Psoas muscle (tissue), 8 donors: ENCODE measurements at regions of chr9 and their contacts with region 1.

Region 1: DNA sequence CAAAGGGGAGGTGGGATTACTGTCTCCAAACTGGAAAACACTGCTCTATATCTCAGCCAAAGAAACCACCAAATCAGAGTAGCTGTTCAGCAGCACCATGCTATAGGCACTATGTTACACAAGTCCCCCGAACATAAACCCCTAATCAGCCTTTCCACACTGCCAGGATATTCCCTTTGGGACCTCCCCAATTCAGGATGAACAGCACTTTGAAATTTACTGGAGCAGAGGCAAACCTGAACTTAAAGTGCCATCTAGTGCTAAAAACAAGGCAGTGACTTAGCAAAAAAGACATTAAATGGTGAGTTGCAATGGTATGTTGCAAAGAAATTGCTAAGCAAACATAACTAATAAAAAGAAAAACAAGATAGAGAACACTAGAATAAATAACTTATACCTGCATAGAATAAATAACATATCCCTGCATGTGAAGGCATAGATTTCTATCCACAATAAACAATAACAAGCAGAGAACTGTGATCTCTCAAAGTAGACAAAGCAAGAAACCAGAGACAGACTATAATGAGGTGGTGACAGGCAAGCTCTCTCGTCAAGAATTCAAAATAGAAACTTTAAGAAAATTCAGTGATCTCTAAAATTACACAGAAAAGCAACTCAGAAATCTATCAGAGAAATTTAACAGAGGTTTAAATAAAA is 584.4 kb upstream of the ACO1 start:
- DNase-seq: no peak
- ATAC-seq: no peak
- H3K4me3 ChIP-seq: no peak overlapping the region
- H3K27ac ChIP-seq: no peak overlapping the region
- H3K4me1 ChIP-seq: no peaks in the 10 kb centered on the region
- H3K27me3 ChIP-seq: no peaks in the 10 kb centered on the region
- CTCF ChIP-seq: peak; percentile 41

Region 2: GRCh38 chr9:31119882-31120454 is 680.1 kb before region 1 on chr9:
- intact Hi-C with region 1: loop called in 1 of 2 experiments (anchors 10 kb)
- DNase-seq: no peak
- ATAC-seq: no peak
- H3K4me3 ChIP-seq: no peak overlapping the region
- H3K27ac ChIP-seq: no peak overlapping the region
- H3K4me1 ChIP-seq: no peaks in the 10 kb centered on the region
- H3K27me3 ChIP-seq: no peaks in the 10 kb centered on the region
- CTCF ChIP-seq: peak; percentile 31

Region 3: DNA sequence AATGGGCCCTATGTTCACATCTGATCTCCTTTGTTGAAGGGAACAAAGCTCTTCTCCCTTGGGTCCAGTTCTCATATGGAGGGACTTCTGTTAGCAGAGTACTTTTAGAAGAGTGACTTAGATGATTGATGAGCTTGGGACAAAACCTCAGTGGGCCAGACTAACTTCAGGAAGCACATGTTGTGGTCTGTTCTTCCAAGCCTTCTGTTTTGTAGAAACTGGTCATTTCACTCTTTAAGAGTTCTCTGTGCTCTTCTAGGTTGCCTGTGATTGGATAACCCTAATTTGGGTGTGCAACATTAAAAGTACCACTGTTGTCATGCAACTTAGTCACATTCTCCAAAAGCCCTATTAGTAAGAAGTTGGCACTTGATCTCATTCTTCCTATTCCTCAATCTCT is 400.8 kb after region 1 on chr9:
- intact Hi-C with region 1: no loop called
- DNase-seq: no peak
- ATAC-seq: no peak
- H3K4me3 ChIP-seq: no peak overlapping the region
- H3K27ac ChIP-seq: no peak overlapping the region
- H3K4me1 ChIP-seq: no peaks in the 10 kb centered on the region
- H3K27me3 ChIP-seq: no peaks in the 10 kb centered on the region
- CTCF ChIP-seq: no peak